PC-3 (cell line): ENCODE measurements at regions of chr14 and their contacts with region 1.

Region 1: DNA sequence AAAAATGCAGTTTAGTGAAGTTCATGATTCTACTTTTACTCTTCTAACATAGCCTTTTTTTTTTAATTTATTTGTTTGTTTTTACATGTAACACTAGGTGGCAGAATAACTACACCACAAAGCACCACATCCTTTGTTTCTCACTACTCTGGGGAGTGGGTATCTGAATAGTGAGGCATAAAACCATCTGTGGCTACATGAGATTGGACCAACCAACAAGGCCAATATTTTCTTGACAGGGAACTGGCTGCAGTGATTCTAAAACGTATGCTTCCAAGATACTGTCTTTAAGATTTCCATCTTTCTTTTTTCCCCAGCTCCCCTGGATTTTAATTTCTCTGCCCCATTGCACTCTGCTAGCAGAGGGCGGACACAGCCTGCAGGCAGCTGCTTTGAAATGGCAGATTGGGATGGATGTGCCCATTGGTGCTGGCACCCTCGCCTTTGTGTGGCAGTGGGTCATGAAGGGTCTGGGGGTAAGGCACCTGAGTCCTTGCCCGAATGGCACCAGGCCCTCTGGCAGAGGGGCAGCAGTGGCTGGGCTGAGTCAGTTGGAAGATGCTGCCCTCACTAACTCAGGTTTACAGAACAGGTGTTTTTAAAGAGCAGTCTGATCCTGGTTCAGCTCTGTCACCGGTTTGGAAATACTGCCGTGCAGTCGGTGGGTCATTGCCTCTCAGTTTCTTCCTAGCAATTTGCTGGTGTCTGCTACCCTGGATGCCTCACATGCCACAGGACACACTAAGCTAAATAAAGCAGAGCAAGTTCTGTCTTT is 429.1 kb downstream of the RAD51B start:
- DNase-seq: peak; percentile 71
- ATAC-seq: 0 out of 2 replicates have a peak, but pooled peaks have one; percentile 6
- H3K4me3 ChIP-seq: no peak overlapping the region
- H3K27ac ChIP-seq: peak overlapping the region; percentile 82
- H3K4me1 ChIP-seq: peaks cover 65% of the 10 kb centered on the region
- H3K27me3 ChIP-seq: no peaks in the 10 kb centered on the region
- CTCF ChIP-seq: peak; percentile 85

Region 2: DNA sequence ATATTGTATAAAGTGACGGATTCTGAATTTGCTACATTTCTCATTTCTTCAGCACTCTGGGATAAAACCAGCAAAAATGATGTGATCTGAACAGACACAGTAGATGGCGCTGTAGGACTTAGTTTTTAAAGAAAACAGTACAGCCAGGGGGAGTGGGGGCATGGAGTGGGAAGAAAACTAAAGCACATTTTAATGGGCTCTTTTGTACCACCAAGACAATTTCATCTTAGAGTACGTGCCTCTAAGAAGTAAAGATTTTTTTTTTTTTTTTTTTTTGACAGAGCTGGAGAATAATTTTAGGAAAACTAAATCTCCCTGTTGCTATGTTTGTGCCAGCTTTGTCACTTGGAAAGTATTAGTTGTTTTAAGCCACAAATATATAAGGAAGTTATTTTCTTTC is 304.7 kb before region 1 on chr14:
- CTCF ChIA-PET with region 1: interaction called, 9 read pairs
- POLR2A ChIA-PET with region 1: interaction called, 8 read pairs
- intact Hi-C with region 1: loop called (anchors 1 kb)
- DNase-seq: peak; percentile 93
- ATAC-seq: peak; percentile 29; the same call in 1 of the 2 replicates
- H3K4me3 ChIP-seq: no peak overlapping the region
- H3K27ac ChIP-seq: 0 out of 2 replicates have a peak overlapping the region, but pooled peaks have one; percentile 1
- H3K4me1 ChIP-seq: peaks cover 34% of the 10 kb centered on the region
- H3K27me3 ChIP-seq: no peaks in the 10 kb centered on the region
- CTCF ChIP-seq: peak; percentile 96

Region 3: DNA sequence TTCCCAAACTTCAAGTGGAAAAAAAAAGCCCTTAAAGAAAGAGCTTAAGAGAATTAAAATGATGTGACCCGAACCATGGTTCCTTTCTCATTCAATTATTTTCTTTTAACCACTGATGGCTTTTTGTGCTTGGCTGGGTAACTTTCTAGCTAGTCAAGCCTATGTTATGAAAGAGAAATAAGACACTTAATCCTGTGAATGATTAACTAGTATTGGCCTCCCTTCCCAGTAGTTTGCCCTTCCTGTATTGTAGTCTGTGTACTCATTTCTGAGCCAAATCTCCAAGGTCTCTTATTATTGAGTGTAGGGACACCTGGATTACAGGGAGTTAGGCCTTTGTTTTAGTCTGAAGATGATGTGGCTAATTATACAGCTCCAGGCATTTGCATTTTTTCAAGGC is 76.0 kb before region 1 on chr14:
- CTCF ChIA-PET with region 1: interaction called, 3 read pairs
- POLR2A ChIA-PET with region 1: interaction called, 3 read pairs
- intact Hi-C with region 1: loop called (anchors 1 kb)
- DNase-seq: peak; percentile 83
- ATAC-seq: peak; percentile 91
- H3K4me3 ChIP-seq: no peak overlapping the region
- H3K27ac ChIP-seq: peak overlapping the region; percentile 69
- H3K4me1 ChIP-seq: peaks cover 49% of the 10 kb centered on the region
- H3K27me3 ChIP-seq: no peaks in the 10 kb centered on the region
- CTCF ChIP-seq: no peak

Region 4: DNA sequence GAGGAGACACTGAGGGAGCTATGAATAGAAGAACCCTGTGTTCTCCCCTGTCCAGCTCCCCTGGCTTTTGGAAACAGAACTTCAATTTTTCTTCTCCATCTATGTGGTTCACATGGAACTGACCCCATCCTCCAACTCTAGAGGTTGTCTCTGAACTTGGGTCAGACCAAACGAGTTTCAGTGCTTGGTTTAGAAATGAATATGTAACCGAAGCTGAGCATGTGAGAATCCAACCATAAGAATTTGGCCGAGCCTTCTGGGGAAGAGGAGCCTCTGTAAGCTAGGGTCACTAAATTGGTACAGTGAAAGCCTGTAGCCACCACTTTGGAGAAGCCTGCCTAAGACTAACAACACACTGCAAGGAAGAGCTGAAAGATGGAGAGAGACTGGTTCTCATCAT is 79.8 kb after region 1 on chr14:
- CTCF ChIA-PET with region 1: no interaction called
- POLR2A ChIA-PET with region 1: no interaction called
- intact Hi-C with region 1: no loop called
- DNase-seq: no peak
- ATAC-seq: no peak
- H3K4me3 ChIP-seq: no peak overlapping the region
- H3K27ac ChIP-seq: no peak overlapping the region
- H3K4me1 ChIP-seq: no peaks in the 10 kb centered on the region
- H3K27me3 ChIP-seq: no peaks in the 10 kb centered on the region
- CTCF ChIP-seq: no peak

Region 5: DNA sequence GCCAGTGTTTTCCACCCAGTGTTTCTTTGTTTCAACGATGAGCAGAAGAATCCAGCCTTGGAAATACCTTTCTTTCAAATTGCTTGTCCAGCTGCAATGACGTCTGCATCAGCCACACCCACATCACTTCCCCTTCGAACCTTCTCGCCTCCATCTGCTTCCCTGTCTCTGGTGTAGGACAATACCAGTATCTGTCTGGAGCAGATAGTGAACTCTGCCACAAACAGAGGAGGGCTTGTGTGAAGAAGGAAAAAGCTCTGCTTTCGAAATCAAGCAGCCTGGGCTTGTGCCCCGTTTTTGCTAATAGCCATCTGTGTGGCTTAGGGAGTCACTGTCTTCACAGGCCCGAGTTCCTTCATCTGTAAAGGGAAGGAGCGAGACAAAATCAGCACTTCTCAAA is 128.8 kb after region 1 on chr14:
- CTCF ChIA-PET with region 1: interaction called, 21 read pairs
- POLR2A ChIA-PET with region 1: interaction called, 12 read pairs
- intact Hi-C with region 1: loop called (anchors 1 kb)
- DNase-seq: no peak
- ATAC-seq: no peak
- H3K4me3 ChIP-seq: no peak overlapping the region
- H3K27ac ChIP-seq: no peak overlapping the region
- H3K4me1 ChIP-seq: peaks cover 33% of the 10 kb centered on the region
- H3K27me3 ChIP-seq: no peaks in the 10 kb centered on the region
- CTCF ChIP-seq: no peak

Region 6: DNA sequence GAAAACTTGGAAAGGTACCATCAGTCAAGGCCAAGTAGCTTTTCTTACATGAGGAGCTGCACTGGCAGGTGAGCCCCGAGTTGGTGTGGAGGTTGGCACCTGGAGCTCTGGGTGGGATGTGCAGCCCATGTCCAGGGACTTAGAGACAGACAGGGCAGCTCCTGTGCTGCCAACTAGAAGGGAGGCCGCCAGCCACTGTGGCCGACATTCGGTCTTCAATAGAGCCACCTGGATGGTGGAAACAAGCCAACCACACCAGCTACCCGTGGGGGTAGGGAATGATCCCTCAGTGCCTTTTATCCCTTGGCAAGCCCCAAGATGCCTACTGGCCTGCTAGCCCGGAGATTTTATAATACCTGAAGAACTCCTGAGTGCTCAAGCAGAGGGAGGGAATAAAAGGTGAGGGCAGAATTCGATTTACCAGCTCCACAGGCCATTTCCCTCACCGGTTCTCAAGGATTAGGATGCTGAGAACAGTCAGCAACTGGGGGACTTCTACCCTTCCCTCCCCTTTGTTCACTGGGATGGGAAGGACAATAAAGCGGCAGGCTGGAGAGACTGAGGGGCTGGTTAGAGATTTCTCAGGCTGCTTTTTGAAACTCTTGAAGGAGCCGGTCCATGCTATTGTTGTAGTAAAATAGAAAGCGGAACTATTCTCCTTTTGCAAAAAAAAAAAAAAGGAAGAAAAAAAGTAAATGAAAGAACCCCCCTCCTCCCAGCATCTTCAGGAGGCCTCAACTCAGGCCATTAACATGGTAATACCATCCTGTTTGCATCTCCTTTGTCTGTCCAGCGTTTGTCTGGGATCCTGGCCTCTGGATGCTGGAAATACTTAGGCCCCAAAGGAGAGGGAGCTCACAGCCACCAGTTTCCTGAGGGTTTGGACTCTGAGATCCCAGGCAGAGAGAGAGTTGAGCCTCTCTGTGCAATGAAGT is 222.6 kb after region 1 on chr14:
- CTCF ChIA-PET with region 1: no interaction called
- POLR2A ChIA-PET with region 1: no interaction called
- intact Hi-C with region 1: no loop called
- DNase-seq: no peak
- ATAC-seq: no peak
- H3K4me3 ChIP-seq: no peak overlapping the region
- H3K27ac ChIP-seq: no peak overlapping the region
- H3K4me1 ChIP-seq: peaks cover 47% of the 10 kb centered on the region
- H3K27me3 ChIP-seq: no peaks in the 10 kb centered on the region
- CTCF ChIP-seq: no peak

Region 7: GRCh38 chr14:68506021-68506644 is 257.5 kb after region 1 on chr14:
- CTCF ChIA-PET with region 1: interaction called, 5 read pairs
- POLR2A ChIA-PET with region 1: no interaction called
- intact Hi-C with region 1: loop called (anchors 2 kb)
- DNase-seq: peak; percentile 71
- ATAC-seq: peak; percentile 72
- H3K4me3 ChIP-seq: no peak overlapping the region
- H3K27ac ChIP-seq: peak overlapping the region; percentile 68
- H3K4me1 ChIP-seq: peaks cover 20% of the 10 kb centered on the region
- H3K27me3 ChIP-seq: no peaks in the 10 kb centered on the region
- CTCF ChIP-seq: no peak

Region 8: DNA sequence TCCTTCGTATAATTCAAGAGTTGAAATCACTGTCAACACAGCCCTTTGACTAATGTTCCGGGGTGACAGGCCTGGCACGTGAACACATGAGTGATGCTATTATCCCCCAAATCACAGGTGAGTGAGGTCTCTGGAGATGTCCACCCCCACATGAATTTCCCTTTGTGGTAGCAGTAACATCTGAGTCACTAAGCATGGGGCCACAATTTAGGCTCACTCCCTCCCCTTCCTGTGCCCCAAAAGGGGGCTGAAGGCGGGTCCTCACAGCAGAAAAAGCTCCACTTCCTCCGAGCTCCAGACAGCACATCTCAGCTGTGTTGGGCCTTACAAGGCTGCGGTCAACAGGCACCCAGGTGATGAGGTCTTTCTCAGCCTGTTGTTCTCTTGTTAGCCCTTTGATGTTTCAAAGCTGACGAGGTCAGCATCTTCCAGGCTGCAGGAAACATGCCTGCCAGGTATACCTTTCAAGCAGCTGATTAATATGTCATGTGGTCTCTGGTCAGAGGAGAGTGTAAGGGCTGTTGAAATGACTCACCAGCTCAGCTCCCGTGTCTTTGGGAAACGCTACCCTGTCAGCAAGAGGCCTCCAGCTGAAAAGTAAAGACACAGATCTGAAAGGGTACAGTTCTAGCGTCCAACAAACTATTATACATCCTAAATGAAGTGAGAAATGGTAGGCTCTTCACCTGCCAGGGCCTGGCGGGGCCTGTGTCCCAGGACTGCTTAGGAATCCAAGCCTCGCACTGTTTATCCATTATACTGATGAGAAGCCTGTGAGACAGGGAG is 436.9 kb after region 1 on chr14:
- CTCF ChIA-PET with region 1: interaction called, 6 read pairs
- POLR2A ChIA-PET with region 1: interaction called, 3 read pairs
- intact Hi-C with region 1: loop called (anchors 2 kb)
- DNase-seq: peak; percentile 95
- ATAC-seq: peak; percentile 67
- H3K4me3 ChIP-seq: no peak overlapping the region
- H3K27ac ChIP-seq: peak overlapping the region; percentile 96
- H3K4me1 ChIP-seq: peaks cover 75% of the 10 kb centered on the region
- H3K27me3 ChIP-seq: no peaks in the 10 kb centered on the region
- CTCF ChIP-seq: no peak